ENCODE measurements at regions of chr10 and their contacts with region 1.

Region 1: DNA sequence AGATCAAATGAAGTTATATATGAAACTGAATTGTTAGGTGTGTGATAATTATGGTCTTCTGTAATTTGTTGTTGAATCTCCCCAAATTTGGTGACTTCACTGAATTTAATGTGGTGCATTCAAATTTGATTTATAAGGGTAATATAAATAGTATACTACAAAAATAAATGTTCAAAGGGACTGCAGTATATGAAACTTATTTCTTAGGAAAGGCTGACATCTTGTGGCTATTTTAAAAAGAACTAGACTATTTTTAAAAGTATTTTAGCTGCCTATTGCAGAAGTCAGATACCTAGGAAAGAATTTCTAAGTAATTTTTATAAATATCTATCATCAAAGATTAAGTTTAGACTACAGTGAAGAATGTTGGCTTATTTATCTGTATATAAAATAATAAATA is 36.6 kb downstream of the ATRNL1 start:
- DNase-seq: peak; percentile 43
- H3K4me3 ChIP-seq: no peak overlapping the region
- H3K27ac ChIP-seq: no peak overlapping the region
- H3K4me1 ChIP-seq: no peaks in the 10 kb centered on the region
- H3K27me3 ChIP-seq: no peaks in the 10 kb centered on the region
- CTCF ChIP-seq: peak; percentile 60; the same call in 1 of the 2 replicates

Region 2: GRCh38 chr10:114703377-114704107 is 426.2 kb before region 1 on chr10:
- CTCF ChIA-PET with region 1: no interaction called
- POLR2A ChIA-PET with region 1: no interaction called
- intact Hi-C with region 1: loop called (anchors 10 kb)
- DNase-seq: peak; percentile 60
- H3K4me3 ChIP-seq: no peak overlapping the region
- H3K27ac ChIP-seq: no peak overlapping the region
- H3K4me1 ChIP-seq: peaks cover 4% of the 10 kb centered on the region
- H3K27me3 ChIP-seq: no peaks in the 10 kb centered on the region
- CTCF ChIP-seq: peak; percentile 73

Region 3: DNA sequence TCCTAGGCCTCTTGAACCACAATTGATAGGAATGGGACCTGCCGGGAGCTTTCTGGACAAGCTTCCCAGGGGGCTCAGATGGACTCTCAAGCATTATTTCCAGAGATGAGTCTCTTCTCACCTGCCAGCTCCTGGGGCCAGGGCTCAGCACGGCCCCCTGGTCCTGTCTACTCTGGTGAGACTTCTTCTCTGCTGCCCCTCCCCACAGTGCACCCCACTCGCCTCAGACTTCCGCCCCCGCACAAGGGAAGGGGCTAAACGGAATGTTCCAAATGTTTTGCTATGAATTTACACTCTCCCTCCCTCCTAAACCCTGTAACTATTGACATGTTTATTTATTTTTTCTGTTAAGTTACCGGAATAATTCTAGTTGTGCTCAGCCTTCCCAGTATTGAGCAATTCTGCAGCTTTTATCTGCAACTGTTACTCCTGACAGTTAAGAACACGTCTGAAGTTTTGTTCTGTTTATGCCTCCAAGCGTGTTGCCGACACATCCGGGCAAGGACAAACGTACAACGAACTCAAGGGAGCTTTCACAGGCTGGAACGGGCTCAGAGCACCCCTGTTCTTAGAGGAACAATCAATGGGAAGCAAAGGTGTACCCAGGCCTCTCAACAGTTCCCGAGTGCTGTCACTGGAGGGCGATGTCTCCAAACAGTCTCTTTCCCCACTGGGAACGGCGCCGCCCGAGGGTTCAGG is 253.0 kb before region 1 on chr10:
- CTCF ChIA-PET with region 1: interaction called, 6 read pairs
- POLR2A ChIA-PET with region 1: no interaction called
- intact Hi-C with region 1: loop called (anchors 1 kb)
- DNase-seq: peak; percentile 80
- H3K4me3 ChIP-seq: no peak overlapping the region
- H3K27ac ChIP-seq: no peak overlapping the region
- H3K4me1 ChIP-seq: peaks cover 29% of the 10 kb centered on the region
- H3K27me3 ChIP-seq: no peaks in the 10 kb centered on the region
- CTCF ChIP-seq: peak; percentile 86

Region 4: DNA sequence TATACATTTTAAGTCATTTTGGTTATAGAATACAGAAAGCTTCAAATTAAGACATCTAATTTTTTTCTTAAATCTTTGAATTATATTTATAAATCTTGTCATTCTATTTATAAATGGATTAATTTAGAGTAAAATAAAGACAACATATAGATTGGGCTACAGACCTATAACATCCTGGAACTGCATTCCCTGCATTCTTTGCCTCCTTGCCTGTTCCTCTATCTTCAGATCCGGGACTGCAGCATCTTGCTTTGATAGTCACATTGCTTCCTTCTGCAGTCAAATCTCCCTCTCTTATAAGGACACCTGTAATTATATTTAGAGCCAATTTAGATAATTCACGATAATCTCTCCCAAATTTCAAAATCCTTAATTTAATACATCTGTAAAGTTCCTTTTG is 27.6 kb after region 1 on chr10:
- CTCF ChIA-PET with region 1: no interaction called
- POLR2A ChIA-PET with region 1: no interaction called
- intact Hi-C with region 1: no loop called
- DNase-seq: no peak
- H3K4me3 ChIP-seq: no peak overlapping the region
- H3K27ac ChIP-seq: no peak overlapping the region
- H3K4me1 ChIP-seq: no peaks in the 10 kb centered on the region
- H3K27me3 ChIP-seq: peaks cover 13% of the 10 kb centered on the region
- CTCF ChIP-seq: no peak

Measured in A673 (cell line).